Posterior vena cava (tissue), 2 donors: ENCODE measurements at regions of chr9 and their contacts with region 1.

Region 1: GRCh38 chr9:113254991-113255390 is 20.4 kb downstream of the CDC26 start:
- DNase-seq: no peak

Region 2: GRCh38 chr9:112945620-112946208 is 309.3 kb before region 1 on chr9:
- intact Hi-C with region 1: no loop called
- DNase-seq: no peak

Region 3: DNA sequence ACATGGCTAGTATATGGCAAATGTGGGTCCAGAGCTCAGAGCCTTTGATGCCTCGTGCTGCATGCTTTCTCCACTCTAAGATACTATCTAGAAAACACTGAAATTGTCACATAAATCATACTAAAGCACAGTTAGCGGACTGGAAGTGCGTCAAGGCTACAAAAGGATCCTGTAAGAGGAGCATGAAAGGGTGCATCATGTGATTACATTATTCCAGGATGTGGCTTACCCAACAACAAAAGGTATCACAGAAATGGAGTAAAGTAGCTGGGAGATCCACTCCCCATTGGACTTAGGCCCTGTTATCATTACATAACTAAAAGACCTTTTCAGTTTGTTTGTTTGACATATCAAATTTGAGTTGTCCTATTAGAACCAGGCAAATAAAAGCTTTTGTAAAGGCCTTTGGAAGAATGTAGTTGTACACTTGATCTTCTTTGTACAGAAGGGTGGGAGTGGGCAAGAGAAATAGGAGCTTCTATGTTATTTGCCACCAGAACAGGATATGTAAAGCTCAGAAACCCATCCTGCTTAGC is 26.8 kb before region 1 on chr9:
- intact Hi-C with region 1: no loop called
- DNase-seq: no peak

Region 4: DNA sequence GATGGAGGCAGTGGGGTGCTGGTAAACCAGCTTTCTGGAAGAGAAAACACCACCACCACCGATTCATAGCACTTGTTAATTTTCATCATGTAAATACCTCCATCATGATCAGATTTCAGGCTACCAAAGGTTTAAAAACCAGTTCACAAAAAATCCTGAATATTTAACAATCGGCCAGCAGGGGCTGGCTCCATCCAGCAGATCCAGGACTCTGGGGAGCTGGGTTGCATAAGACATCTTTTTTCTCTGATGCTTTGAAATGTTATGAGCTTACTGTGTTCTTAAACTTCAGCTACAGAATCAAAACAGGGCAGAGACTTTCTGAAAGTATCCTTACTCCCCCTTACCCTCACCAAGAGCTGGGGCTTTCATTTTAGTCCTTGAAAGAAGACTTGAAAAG is 62.8 kb after region 1 on chr9:
- intact Hi-C with region 1: loop called in 1 of 2 experiments (anchors 2 kb)
- DNase-seq: no peak

Region 5: DNA sequence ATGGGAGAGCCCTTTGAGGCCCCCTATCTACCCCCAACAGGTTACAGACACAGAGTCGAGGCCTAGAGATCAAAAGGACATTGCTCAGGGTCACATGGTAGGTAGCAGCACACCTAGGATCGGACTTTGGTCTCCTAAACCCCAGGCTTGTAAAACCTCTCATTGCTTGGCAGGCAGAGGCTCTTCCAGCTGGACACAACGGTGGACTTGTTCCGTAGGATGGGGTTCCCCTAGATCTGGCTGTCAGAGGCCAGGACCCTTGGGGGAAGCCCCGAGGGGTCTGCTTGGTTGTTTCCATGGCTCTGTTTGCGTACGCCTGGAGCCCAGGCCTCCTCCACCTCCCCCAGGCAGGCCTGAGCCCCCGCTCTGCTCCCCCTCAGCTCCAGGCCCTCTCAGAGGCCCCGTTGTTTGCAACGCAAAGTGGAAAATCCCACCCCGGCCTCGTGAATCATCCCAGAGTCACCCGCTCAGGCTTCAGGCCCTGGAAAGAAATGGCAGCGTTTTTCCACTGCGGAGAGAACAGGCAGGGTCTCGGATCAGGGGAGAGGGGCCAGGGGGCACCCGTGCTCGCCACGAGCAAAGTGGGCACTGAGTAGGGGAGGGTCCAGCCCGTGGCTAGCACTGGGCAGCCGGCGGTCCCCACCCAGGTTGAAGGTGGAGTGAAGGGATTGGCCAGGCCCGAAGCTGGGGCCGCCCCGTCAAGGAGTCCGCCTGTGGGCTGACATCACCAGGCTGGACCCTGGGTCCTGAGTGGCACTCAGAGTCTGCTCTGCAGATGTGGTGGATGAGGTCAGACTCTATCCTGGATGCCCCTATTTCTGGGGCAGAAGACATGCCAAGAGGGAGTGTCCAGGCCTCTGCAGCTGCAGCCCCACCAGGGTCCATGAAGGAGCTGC is 920.1 kb after region 1 on chr9:
- intact Hi-C with region 1: loop called in 1 of 2 experiments (anchors 5 kb)
- DNase-seq: no peak